ENCODE measurements at regions of chr20 and their contacts with region 1.

Region 1: GRCh38 chr20:52959125-52959524 is 13.0 kb upstream of the TSHZ2 start:
- DNase-seq: no peak
- ATAC-seq: no peak
- H3K4me3 ChIP-seq: no peak overlapping the region
- H3K27ac ChIP-seq: no peak overlapping the region
- H3K4me1 ChIP-seq: no peaks in the 10 kb centered on the region
- H3K27me3 ChIP-seq: no peaks in the 10 kb centered on the region
- CTCF ChIP-seq: no peak

Region 2: DNA sequence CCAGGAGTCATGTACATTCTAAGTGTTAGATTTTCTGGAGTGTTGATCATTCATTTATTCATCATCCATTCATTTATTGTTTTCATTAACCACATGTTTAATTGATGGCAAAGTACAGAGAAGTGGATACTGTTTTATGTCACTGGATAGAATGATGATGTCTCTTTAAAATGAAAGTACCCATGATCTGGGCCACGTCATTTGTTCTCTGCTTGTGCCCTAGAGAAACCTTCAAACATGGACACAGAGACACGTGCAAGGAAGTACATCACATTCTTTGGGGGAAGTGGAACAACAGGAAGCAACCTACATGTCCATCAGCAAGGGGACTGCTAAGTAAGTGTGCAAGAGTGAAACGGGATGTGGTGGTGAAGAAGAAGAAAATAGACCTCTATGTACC is 62.8 kb before region 1 on chr20:
- intact Hi-C with region 1: no loop called
- DNase-seq: no peak
- ATAC-seq: no peak
- H3K4me3 ChIP-seq: no peak overlapping the region
- H3K27ac ChIP-seq: no peak overlapping the region
- H3K4me1 ChIP-seq: peaks cover 0 to 10% (median 0%) of the 10 kb centered on the region in 9 donors
- H3K27me3 ChIP-seq: no peaks in the 10 kb centered on the region
- CTCF ChIP-seq: no peak

Region 3: DNA sequence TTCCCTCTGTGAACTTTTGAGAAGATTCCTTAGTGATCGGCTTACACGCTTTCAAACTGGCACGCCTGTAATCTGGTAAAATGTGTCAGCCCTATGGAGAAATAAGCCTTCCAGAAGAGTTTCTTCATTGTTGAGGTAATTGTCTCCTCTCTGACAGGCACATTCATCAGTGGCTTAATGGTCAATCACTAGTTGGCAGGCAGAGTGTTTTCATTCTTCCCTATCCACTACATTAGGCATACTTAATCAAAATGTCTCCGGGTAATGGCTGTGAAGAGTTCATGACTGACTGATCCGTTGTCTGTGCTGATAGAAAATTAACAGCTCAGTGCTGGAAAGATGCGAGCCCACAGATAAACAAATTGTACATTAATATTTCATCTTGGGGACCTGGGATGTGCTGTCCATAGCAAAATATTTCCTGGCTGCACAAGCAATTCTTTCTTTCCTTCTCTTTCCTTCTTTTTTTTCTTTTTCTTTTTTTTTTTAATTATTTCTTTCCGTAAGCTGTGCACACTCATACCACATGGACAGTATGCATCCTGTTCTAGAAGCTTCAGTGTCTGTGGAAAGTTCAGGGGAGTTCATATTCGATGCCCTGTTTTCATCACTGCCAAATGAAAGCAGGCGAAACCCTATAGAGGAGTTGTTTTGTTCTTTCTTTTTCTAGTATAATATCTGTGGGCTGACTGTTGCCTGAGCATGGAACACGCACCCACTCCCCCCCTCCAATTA is 44.5 kb after region 1 on chr20:
- intact Hi-C with region 1: loop called in 1 of 10 experiments (anchors 1 kb)
- DNase-seq: no peak
- ATAC-seq: no peak
- H3K4me3 ChIP-seq: no peak overlapping the region
- H3K27ac ChIP-seq: no peak overlapping the region
- H3K4me1 ChIP-seq: peaks cover 0 to 12% (median 5%) of the 10 kb centered on the region in 9 donors
- H3K27me3 ChIP-seq: peaks cover 0 to 17% (median 0%) of the 10 kb centered on the region in 7 donors
- CTCF ChIP-seq: no peak

Region 4: GRCh38 chr20:53061192-53062108 is 102.3 kb after region 1 on chr20:
- intact Hi-C with region 1: no loop called
- DNase-seq: no peak
- ATAC-seq: no peak
- H3K4me3 ChIP-seq: no peak overlapping the region
- H3K27ac ChIP-seq: no peak overlapping the region
- H3K4me1 ChIP-seq: no peaks in the 10 kb centered on the region
- H3K27me3 ChIP-seq: no peaks in the 10 kb centered on the region
- CTCF ChIP-seq: no peak